Left cardiac atrium (tissue), 4 donors: ENCODE measurements at regions of chr9 and their contacts with region 1.

Region 1: GRCh38 chr9:489198-490197 is 274.8 kb downstream of the DOCK8 start:
- DNase-seq: no peak
- ATAC-seq: peak in 1 of 2 donors; percentile 23

Region 2: GRCh38 chr9:437574-438001 is 51.9 kb before region 1 on chr9:
- intact Hi-C with region 1: loop called in 1 of 2 experiments (anchors 10 kb)
- DNase-seq: no peak
- ATAC-seq: peak; percentile 78 to 90

Region 3: DNA sequence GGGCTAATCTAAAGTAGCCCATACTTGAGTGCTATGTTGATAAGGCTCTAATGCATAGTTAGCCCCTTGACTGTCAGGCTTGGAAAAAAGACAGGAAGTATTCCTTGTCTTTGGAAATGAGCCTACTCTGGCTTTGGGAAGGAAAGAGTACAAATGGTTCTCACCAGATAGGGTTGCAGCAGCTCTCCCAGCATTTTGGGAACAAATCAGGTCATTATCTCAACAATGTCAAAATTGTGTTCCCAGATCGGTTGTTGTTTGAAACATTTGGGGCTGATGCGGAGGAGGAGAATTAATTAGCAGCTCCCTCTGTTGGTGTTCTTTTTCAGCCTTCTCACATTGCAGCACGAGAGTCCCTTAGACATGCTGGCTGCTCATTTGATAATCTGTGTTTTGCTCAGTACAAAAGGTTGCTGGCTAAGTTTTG is 57.3 kb after region 1 on chr9:
- intact Hi-C with region 1: no loop called
- DNase-seq: no peak
- ATAC-seq: peak; percentile 61 to 82

Region 4: DNA sequence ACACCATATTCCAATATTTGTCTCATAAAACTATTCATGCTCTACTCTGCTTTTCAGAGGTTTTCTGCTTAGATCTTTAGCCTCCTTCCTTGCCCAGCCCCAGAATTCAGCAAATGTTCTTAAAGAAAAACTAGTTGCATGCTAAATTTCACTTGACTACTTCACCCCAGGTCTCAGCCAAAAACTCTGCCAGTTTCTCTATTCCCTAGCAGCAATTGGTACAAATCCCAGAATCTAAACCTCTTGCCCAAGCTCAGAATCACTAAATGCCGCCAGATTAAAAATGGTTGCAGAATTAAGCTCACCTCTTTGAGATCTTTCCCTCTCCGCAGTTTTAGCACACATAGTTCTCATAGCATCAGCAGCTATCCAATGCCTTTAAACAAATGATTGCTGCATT is 1194.5 kb after region 1 on chr9:
- intact Hi-C with region 1: loop called in 1 of 2 experiments (anchors 10 kb)
- DNase-seq: no peak
- ATAC-seq: no peak